B cell (primary cell): ENCODE measurements at regions of chr15 and their contacts with region 1.

Region 1: GRCh38 chr15:80977627-80978036 is 12.0 kb downstream of the MESD start:
- DNase-seq: peak; percentile 53
- ATAC-seq: peak; percentile 53
- H3K4me3 ChIP-seq: no peak overlapping the region
- H3K4me3 Mint-ChIP-seq: peak overlapping the region; percentile 32
- H3K27ac ChIP-seq: peak overlapping the region in 1 of 2 donors; percentile 2
- H3K27ac Mint-ChIP-seq: peak overlapping the region; percentile 67
- H3K4me1 ChIP-seq: peaks cover 6 to 9% of the 10 kb centered on the region in 2 donors
- H3K4me1 Mint-ChIP-seq: peaks cover 30% of the 10 kb centered on the region
- H3K27me3 ChIP-seq: no peaks in the 10 kb centered on the region
- H3K27me3 Mint-ChIP-seq: no peaks in the 10 kb centered on the region
- CTCF ChIP-seq: peak; percentile 51

Region 2: GRCh38 chr15:80679167-80680131 is 298.2 kb before region 1 on chr15:
- CTCF ChIA-PET with region 1: no interaction called
- POLR2A ChIA-PET with region 1: no interaction called
- intact Hi-C with region 1: no loop called
- DNase-seq: no peak
- ATAC-seq: no peak
- H3K4me3 ChIP-seq: no peak overlapping the region
- H3K4me3 Mint-ChIP-seq: no peak overlapping the region
- H3K27ac ChIP-seq: no peak overlapping the region
- H3K27ac Mint-ChIP-seq: no peak overlapping the region
- H3K4me1 ChIP-seq: no peaks in the 10 kb centered on the region
- H3K4me1 Mint-ChIP-seq: no peaks in the 10 kb centered on the region
- H3K27me3 ChIP-seq: peaks cover 0 to 6% (median 2%) of the 10 kb centered on the region in 4 experiments
- H3K27me3 Mint-ChIP-seq: peaks cover 42% of the 10 kb centered on the region
- CTCF ChIP-seq: no peak

Region 3: GRCh38 chr15:81106560-81106959 is 128.9 kb after region 1 on chr15:
- CTCF ChIA-PET with region 1: interaction called, 10 read pairs
- POLR2A ChIA-PET with region 1: no interaction called
- intact Hi-C with region 1: loop called (anchors 1 kb)
- DNase-seq: peak; percentile 59
- ATAC-seq: peak; percentile 53
- H3K4me3 ChIP-seq: no peak overlapping the region
- H3K4me3 Mint-ChIP-seq: no peak overlapping the region
- H3K27ac ChIP-seq: no peak overlapping the region
- H3K27ac Mint-ChIP-seq: no peak overlapping the region
- H3K4me1 ChIP-seq: no peaks in the 10 kb centered on the region
- H3K4me1 Mint-ChIP-seq: peaks cover 6% of the 10 kb centered on the region
- H3K27me3 ChIP-seq: peaks cover 0 to 12% (median 4%) of the 10 kb centered on the region in 4 experiments
- H3K27me3 Mint-ChIP-seq: peaks cover 42% of the 10 kb centered on the region
- CTCF ChIP-seq: peak; percentile 79